Activated CD4-positive, alpha-beta memory T cell treated with anti-CD3 and anti-CD28 coated beads, Interleukin-2, amount 10 ng/mL, durations not matched to agents 7 days and 5 days (primary cell): ENCODE measurements at regions of chr10 and their contacts with region 1.

Region 1: GRCh38 chr10:133357285-133358151 is at the start of gene FUOM:
- DNase-seq: peak; percentile 71
- H3K4me3 Mint-ChIP-seq: peak within 1 kb of the TSS; percentile 69
- H3K27ac Mint-ChIP-seq: no peak within 1 kb of the TSS
- H3K4me1 Mint-ChIP-seq: no peaks in the 10 kb centered on the region
- H3K27me3 Mint-ChIP-seq: no peaks in the 10 kb centered on the region
- total RNA-seq, gene FUOM: 11.2 to 11.4 TPM

Region 2: DNA sequence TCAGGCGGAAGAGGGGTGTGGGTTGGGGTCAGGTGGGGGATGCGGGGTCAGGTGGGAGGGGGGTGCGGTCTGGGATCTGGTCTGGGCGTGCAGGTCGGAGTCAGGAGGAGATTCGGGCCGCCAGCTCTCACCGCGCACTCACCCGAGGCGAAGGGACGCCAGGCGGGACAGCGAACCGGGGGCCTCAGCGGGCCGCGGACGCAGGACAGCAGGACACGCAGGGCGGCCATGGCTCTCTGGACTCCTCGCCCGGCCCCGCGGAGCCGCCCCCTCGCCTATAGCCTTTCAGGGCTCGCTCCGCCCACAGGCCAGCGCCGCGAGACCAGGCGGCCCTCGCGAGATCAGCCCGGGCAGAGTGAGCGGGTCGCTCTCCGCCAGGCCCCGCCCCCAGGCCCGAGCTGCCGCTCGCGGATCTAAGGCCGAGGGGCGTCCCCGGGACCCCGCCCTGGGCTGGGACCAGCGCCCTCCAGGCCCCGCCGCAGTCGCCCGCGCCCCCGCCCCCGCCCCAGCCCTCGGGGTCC is 15.6 kb after region 1 on chr10 and contains the start of gene ECHS1:
- CTCF ChIA-PET with region 1: no interaction called
- POLR2A ChIA-PET with region 1: interaction called, 12 read pairs
- DNase-seq: peak; percentile 96
- H3K4me3 Mint-ChIP-seq: peak within 1 kb of the TSS; percentile 73
- H3K27ac Mint-ChIP-seq: peak within 1 kb of the TSS; percentile 21
- H3K4me1 Mint-ChIP-seq: peaks cover 24% of the 10 kb centered on the region
- H3K27me3 Mint-ChIP-seq: peaks cover 8% of the 10 kb centered on the region
- total RNA-seq, gene ECHS1: 31.3 to 31.6 TPM

Region 3: GRCh38 chr10:133608855-133609254 is 251.3 kb after region 1 on chr10:
- CTCF ChIA-PET with region 1: no interaction called
- POLR2A ChIA-PET with region 1: no interaction called
- DNase-seq: no peak
- H3K4me3 Mint-ChIP-seq: no peak overlapping the region
- H3K27ac Mint-ChIP-seq: no peak overlapping the region
- H3K4me1 Mint-ChIP-seq: no peaks in the 10 kb centered on the region
- H3K27me3 Mint-ChIP-seq: peaks cover 55% of the 10 kb centered on the region